ENCODE measurements at regions of chr6 and their contacts with region 1.

Region 1: DNA sequence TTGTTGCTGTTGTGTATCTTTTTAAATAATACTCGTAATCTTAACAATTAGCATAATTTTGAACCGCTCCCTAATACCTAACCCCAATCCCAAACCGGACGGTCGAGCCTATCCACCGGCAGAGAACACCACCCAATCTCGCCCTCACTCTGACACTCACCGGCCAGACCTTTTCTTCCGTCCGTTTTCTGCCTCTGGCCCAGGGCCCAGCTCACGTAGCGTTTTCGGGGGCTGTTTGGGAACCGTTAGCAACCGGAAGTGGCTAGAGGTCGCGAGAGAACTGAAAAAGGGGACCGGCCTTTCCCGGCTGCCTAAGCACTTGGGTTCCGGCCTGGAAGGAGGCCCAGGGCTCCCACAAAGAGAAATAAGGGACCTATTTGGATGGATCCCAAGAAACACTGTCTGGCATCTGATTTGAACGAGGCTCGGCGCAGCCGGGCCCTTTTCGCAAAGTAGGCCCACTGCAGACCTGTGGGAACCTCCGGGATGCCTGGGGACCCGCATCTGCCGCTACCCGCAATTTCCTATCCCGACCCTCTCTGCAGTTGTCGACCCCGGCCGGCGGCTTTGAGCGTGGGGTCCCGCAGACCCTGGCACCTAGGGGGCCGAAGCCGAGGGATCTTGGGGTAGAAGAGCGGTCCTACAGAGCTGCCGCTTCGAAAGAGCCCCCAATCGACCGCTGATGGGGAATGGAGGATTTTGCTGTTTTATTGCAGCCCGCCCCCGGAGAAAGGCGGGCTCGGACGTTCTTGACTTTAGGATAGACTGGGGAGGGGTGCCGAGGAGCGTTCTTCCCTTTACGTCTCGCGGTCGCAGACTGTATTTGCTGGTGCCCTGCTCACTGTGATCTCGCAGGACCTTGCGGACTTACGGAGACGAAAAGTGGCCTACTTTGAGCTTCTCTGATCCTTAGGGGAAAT is 4.8 kb upstream of the ZKSCAN8 start:
- DNase-seq: peak; percentile 85
- H3K4me3 Mint-ChIP-seq: peak overlapping the region; percentile 82
- H3K27ac Mint-ChIP-seq: peak overlapping the region; percentile 92
- H3K4me1 Mint-ChIP-seq: peaks cover 65% of the 10 kb centered on the region
- H3K27me3 Mint-ChIP-seq: no peaks in the 10 kb centered on the region

Region 2: DNA sequence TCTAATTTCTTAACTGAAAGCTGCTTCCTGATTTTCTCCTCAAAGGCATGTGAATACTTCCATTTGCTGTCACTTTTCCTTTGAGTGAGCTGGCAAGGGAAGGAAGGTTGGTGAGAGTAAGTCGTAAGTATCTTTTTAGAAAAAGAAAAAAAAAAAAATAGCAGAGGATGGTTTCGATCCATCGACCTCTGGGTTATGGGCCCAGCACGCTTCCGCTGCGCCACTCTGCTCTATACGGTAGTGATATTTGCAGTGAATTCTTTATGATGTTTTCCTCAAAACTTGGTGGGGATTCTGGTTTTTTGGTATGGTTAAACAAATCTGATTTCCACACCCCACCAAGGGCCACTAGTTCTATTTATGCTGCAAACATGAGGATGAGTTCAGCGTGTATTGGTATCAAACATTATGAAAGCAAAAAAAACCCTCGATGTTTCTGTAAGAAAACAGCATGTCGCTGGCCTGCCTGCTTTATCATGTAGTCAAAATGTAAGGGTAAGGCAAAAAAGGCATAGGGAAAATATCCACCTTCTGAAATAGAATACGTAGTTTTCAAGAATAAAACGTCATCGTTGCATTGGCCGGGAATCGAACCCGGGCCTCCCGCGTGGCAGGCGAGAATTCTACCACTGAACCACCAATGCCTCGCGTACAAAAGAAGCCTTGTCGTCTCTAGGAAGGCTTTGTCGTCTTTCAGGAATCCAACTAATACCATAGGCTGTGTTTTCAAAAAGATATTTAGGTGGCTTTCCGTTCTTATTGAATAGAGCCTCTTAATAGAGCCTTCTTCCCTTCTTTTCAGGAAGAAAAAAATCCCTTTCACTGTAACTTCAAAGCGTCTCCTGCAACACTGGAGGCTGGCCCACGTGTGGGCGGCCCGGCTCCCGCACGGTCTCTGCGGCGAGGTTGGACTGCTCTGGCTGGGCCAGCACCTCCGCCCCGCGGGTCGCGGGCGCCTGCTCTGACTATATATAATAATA is 234.2 kb before region 1 on chr6:
- CTCF ChIA-PET with region 1: no interaction called
- POLR2A ChIA-PET with region 1: no interaction called
- intact Hi-C with region 1: loop called (anchors 5 kb)
- DNase-seq: peak; percentile 92
- H3K4me3 Mint-ChIP-seq: peak overlapping the region; percentile 79
- H3K27ac Mint-ChIP-seq: peak overlapping the region; percentile 91
- H3K4me1 Mint-ChIP-seq: peaks cover 11% of the 10 kb centered on the region
- H3K27me3 Mint-ChIP-seq: peaks cover 13% of the 10 kb centered on the region

Region 3: DNA sequence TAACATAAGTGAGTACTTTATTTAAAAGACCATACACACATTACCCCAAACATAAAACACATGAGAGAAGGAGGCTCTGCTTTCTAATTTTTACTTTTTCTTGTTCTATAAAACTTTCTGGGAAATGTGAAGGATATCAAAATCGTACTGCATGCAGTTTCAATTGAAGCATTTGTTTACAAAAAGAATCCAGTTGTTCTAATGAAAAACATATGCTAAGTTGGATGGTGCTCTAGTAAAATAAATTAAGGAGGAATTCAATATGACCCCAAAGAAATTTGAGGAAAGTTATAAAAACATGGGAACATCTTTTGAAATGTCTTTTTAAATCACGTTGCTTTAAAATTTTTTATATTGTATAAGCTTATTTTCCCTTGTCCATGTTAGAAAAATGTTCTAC is 142.2 kb before region 1 on chr6:
- CTCF ChIA-PET with region 1: no interaction called
- POLR2A ChIA-PET with region 1: no interaction called
- intact Hi-C with region 1: no loop called
- DNase-seq: no peak
- H3K4me3 Mint-ChIP-seq: no peak overlapping the region
- H3K27ac Mint-ChIP-seq: no peak overlapping the region
- H3K4me1 Mint-ChIP-seq: no peaks in the 10 kb centered on the region
- H3K27me3 Mint-ChIP-seq: peaks cover 23% of the 10 kb centered on the region

Region 4: DNA sequence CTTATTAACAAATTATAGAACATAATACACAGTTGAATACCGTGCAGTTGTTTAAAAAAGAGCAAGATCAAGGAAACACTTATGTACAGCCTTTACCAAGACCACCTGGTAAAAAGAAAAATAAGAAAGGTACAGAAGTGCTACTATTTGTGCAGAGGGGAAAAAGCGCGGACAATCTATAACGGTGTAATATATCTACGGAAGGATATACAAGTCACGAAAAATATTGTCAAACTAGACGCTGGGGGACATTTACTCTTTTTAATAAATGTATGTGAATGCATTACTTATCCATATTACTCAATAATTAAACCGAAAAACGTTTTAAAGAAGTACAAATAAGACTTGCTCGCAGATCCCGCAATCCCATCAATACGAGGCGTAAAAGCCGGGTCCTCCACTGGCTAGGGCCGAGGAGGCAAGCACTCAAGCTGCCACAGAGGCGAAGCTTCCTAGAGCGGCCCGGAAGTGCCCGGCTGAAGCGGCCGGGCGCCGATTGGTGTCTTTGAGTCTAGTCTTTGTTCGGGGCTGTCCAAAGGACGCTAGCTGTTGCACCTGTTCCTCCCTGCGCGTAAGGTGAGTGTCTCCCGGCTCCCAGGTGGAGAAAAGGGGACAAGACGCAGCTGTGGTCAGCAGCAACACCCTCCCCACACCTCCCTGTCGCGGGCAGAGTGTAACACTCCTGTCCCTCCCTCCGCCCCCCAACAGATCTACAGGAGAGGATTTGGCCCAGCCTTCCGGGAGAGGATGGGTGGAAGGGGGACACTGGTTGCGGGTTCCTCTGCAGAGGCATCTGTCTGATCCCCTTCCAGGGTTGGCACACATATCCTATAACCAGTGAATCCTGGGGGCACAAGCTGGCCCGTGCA is 12.5 kb before region 1 on chr6 and contains the start of gene ZSCAN16:
- CTCF ChIA-PET with region 1: interaction called, 13 read pairs
- POLR2A ChIA-PET with region 1: interaction called, 10 read pairs
- intact Hi-C with region 1: loop called (anchors 2 kb)
- DNase-seq: peak; percentile 84
- H3K4me3 Mint-ChIP-seq: peak within 1 kb of the TSS; percentile 91
- H3K27ac Mint-ChIP-seq: peak within 1 kb of the TSS; percentile 91
- H3K4me1 Mint-ChIP-seq: peaks cover 34% of the 10 kb centered on the region
- H3K27me3 Mint-ChIP-seq: no peaks in the 10 kb centered on the region
- total RNA-seq, gene ZSCAN16: 2.8 to 3.6 TPM

Region 5: GRCh38 chr6:28266962-28267694 is 130.3 kb after region 1 on chr6 and contains the start of gene ZSCAN26:
- CTCF ChIA-PET with region 1: no interaction called
- POLR2A ChIA-PET with region 1: interaction called, 6 read pairs
- intact Hi-C with region 1: loop called (anchors 1 kb)
- DNase-seq: peak; percentile 89
- H3K4me3 Mint-ChIP-seq: no peak within 1 kb of the TSS
- H3K27ac Mint-ChIP-seq: no peak within 1 kb of the TSS
- H3K4me1 Mint-ChIP-seq: peaks cover 36% of the 10 kb centered on the region
- H3K27me3 Mint-ChIP-seq: no peaks in the 10 kb centered on the region
- total RNA-seq, gene ZSCAN26: 6.0 to 6.4 TPM

Region 6: GRCh38 chr6:28355743-28356665 is 219.2 kb after region 1 on chr6:
- CTCF ChIA-PET with region 1: interaction called, 29 read pairs
- POLR2A ChIA-PET with region 1: no interaction called
- intact Hi-C with region 1: loop called (anchors 1 kb)
- DNase-seq: peak; percentile 61
- H3K4me3 Mint-ChIP-seq: peak overlapping the region; percentile 85
- H3K27ac Mint-ChIP-seq: no peak overlapping the region
- H3K4me1 Mint-ChIP-seq: peaks cover 18% of the 10 kb centered on the region
- H3K27me3 Mint-ChIP-seq: no peaks in the 10 kb centered on the region

Region 7: GRCh38 chr6:28940858-28941680 is 804.2 kb after region 1 on chr6:
- CTCF ChIA-PET with region 1: no interaction called
- POLR2A ChIA-PET with region 1: no interaction called
- intact Hi-C with region 1: loop called (anchors 5 kb)
- DNase-seq: peak; percentile 82
- H3K4me3 Mint-ChIP-seq: peak overlapping the region; percentile 84
- H3K27ac Mint-ChIP-seq: peak overlapping the region; percentile 96
- H3K4me1 Mint-ChIP-seq: peaks cover 48% of the 10 kb centered on the region
- H3K27me3 Mint-ChIP-seq: no peaks in the 10 kb centered on the region

Measured in activated CD4-positive, alpha-beta memory T cell treated with anti-CD3 and anti-CD28 coated beads for 36 hours (primary cell).